GM10248 (cell line): ENCODE measurements at regions of chr1 and their contacts with region 1.

Region 1: GRCh38 chr1:47437447-47438164 is at the start of gene FOXD2:
- DNase-seq: peak; percentile 96
- CTCF ChIP-seq: peak; percentile 75

Region 2: DNA sequence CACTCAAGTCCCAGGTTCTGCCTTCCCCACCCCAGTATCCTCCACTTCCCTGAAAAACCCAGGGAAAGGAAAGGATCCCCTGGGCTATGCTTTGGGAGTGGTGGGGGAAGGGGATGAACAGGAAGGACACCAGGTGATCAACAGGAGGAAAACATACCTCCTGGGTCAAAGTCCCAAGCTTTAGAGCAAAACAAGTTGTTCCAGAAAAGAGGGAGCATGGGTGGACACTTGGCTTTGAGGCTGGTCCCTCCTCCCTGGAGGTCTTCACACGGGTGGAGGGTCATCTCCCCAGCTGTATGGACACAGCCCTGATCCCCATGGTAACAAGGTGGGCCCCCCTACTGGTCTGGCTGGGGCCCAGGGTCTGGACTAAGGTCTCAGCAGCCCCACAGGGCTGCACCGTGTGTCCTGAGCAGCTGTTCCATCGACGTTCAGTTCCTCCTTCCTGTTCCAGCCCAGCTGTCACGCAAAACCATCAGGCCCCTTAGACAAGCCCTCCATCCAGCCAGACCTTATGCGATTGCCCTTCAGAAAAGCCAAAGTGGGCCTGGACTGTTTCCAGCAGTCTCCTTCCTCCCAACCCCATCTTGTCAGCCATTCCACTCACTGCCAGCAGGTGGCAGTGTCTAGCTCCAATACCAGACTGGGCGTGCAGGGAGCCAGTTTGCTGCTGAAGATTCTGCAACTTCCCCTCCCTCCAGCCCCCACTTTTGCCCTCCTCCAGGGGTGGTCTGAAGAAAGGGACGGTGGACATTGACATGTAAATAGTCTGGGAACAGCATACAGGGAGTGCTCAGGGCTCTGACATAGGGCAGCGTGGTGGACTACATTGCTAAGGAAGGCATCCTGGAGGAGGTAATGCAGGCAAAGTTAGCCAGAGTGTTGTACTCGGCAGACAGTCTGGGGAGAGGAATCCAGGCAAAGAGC is 244.9 kb before region 1 on chr1:
- CTCF ChIA-PET with region 1: interaction called, 12 read pairs
- POLR2A ChIA-PET with region 1: no interaction called
- DNase-seq: peak; percentile 79
- CTCF ChIP-seq: peak; percentile 98

Region 3: DNA sequence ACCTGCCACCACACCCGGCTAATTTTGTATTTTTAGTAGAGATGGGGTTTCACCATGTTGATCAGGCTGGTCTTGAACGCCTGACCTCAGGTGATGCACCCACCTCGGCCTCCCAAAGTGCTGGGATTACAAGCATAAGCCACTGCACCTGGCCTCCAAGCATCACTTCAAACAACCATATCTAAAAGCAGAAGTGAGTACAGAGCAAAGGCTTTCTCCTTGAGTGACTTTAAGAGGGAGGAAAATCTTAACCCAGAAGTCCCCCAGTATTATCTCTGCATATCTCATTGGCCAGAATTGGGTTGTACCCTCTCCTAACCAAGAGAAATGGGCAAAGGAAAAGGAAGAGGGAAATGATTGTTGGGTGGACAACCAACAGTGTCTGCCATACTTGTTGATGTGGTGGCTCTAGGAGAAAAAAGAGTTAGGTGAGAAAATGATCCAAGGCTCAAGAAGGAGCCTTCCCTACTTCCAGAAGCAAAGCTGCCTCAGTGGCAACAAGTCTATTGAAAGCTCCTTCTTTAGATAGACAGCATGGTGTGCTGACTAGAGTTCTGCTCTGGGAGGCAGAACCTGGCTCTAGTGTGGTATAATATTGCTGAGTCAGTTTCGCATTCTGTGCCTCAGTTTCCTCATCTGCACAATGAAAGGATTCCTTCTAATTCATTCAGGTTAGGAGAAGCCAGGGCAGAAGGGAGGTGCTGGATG is 38.3 kb before region 1 on chr1:
- CTCF ChIA-PET with region 1: interaction called, 15 read pairs
- POLR2A ChIA-PET with region 1: no interaction called
- DNase-seq: no peak
- CTCF ChIP-seq: no peak

Region 4: GRCh38 chr1:47416319-47417169 is 21.1 kb before region 1 on chr1:
- CTCF ChIA-PET with region 1: interaction called, 50 read pairs
- POLR2A ChIA-PET with region 1: no interaction called
- DNase-seq: no peak
- CTCF ChIP-seq: no peak

Region 5: GRCh38 chr1:47449822-47450552 is 12.4 kb after region 1 on chr1:
- CTCF ChIA-PET with region 1: interaction called, 41 read pairs
- POLR2A ChIA-PET with region 1: no interaction called
- DNase-seq: no peak
- CTCF ChIP-seq: peak; percentile 24

Region 6: GRCh38 chr1:47703981-47704596 is 266.5 kb after region 1 on chr1:
- CTCF ChIA-PET with region 1: interaction called, 60 read pairs
- POLR2A ChIA-PET with region 1: no interaction called
- DNase-seq: no peak
- CTCF ChIP-seq: no peak

Region 7: DNA sequence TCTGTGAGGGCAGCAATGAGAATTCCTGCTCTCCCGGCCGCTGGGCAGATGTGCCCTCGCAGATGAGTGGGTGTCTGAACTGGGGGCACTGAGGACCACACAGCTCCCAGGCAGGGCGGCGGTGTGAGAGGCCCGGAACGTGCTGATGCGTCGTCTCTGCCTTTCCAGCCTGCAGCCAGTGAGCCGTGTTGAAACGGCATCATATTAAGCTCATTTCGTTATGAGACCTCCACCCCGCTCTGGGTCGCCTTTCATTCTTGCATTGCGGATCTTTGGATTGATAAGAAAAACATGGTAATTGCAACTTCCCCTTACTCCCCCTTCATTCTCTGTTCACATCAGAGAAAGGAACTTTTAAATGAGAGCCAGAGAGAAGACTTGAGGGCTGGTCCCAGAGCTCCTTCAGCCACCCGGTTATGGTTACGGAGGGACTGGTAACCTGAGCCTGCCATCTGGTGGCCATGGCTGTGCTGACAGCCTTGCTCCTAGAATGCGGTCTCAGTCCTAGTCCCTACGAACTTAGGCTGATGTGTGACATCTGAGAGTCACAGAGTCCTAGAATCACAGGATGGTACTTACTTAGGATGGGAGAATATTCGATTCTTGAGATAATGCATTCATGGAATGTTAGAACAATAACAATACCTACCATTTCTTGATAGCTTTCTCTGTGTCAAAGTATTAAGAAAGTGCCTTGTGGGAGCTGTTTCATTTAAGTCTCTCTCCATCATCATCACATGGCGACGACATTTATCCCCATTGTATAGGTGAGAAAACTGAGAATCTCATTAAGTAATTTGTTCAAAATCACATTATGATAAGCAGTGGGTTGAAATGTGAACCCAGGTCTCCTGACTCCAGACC is 288.6 kb after region 1 on chr1:
- CTCF ChIA-PET with region 1: interaction called, 226 read pairs
- POLR2A ChIA-PET with region 1: no interaction called
- DNase-seq: peak; percentile 81
- CTCF ChIP-seq: peak; percentile 85